ENCODE measurements at regions of chr16 and their contacts with region 1.

Region 1: DNA sequence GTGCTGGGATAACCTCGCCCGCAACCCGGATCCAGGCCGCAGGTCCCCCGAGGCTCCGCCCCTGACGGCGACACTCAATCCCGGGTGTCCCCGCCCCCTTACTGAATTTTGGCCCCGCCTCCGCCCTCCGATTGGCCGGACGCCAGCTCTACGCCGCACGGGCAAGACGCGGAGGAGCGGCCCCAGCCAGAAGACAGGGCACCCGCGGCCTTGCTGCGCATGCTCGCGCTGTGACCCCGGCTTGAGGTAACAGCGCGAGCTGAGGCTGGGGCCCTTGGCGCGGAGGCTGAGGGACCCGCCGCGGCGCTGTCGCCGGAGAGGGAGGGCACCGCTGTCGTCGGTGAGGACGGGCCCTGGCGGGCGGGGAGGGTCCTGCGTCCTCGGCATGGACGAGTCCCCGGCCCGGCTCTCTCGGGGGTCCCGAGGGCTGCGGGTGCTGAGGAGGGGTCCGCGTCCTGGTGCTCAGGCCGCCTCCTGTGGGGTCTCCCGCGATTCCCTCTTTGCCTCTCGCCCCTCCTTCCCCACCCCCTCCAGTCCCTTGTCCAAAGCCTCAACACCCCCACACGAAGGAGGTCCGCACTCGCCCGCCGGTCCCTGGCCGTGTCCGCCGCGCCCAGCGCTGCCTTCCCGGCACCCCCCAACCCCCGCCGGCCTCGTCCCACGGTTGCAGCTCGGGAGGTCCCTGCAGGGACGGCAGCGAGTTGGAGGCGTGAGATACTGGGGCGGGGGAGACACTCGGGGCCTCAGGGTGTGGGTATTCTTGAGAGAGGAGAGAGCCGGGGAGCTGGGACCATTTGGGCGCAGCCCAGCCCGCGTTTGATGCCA is at the start of gene FLYWCH2:
- DNase-seq: peak; percentile 98
- H3K4me3 ChIP-seq: peak within 1 kb of the TSS; percentile 50 to 71
- H3K27ac ChIP-seq: peak within 1 kb of the TSS; percentile 91 to 96
- H3K4me1 ChIP-seq: peaks cover 5% of the 10 kb centered on the region
- H3K27me3 ChIP-seq: no peaks in the 10 kb centered on the region
- CTCF ChIP-seq: peak in 2 of 4 experiments; percentile 34 to 51
- POLR2A ChIP-seq: peak; percentile 93
- total RNA-seq, gene FLYWCH2: 78.8 to 150 TPM

Region 2: GRCh38 chr16:2486645-2487516 is 396.4 kb before region 1 on chr16:
- intact Hi-C with region 1: no loop called
- DNase-seq: peak; percentile 56
- H3K4me3 ChIP-seq: no peak overlapping the region
- H3K27ac ChIP-seq: no peak overlapping the region
- H3K4me1 ChIP-seq: peaks cover 2% of the 10 kb centered on the region
- H3K27me3 ChIP-seq: no peaks in the 10 kb centered on the region
- CTCF ChIP-seq: peak in 3 of 4 experiments; percentile 26 to 57 (median 50)
- POLR2A ChIP-seq: no peak

Region 3: GRCh38 chr16:2905431-2906387 is 22.5 kb after region 1 on chr16:
- intact Hi-C with region 1: loop called (anchors 2 kb)
- DNase-seq: peak; percentile 100
- H3K4me3 ChIP-seq: peak overlapping the region; percentile 78 to 86
- H3K27ac ChIP-seq: peak overlapping the region; percentile 94 to 95
- H3K4me1 ChIP-seq: no peaks in the 10 kb centered on the region
- H3K27me3 ChIP-seq: no peaks in the 10 kb centered on the region
- CTCF ChIP-seq: no peak
- POLR2A ChIP-seq: no peak

Measured in prostate gland (tissue), 2 donors.